ENCODE measurements at regions of chr15 and their contacts with region 1.

Region 1: GRCh38 chr15:34437687-34438086 is at the start of gene GOLGA8A:
- DNase-seq: peak; percentile 79
- H3K4me3 Mint-ChIP-seq: peak within 1 kb of the TSS; percentile 92
- H3K27ac Mint-ChIP-seq: peak within 1 kb of the TSS; percentile 95
- H3K4me1 Mint-ChIP-seq: peaks cover 20% of the 10 kb centered on the region
- H3K27me3 Mint-ChIP-seq: peaks cover 14% of the 10 kb centered on the region
- total RNA-seq, gene GOLGA8A: 238 and 258 TPM in 2 replicates

Region 2: GRCh38 chr15:33894193-33894592 is 543.5 kb before region 1 on chr15:
- intact Hi-C with region 1: no loop called
- DNase-seq: no peak
- H3K4me3 Mint-ChIP-seq: no peak overlapping the region
- H3K27ac Mint-ChIP-seq: no peak overlapping the region
- H3K4me1 Mint-ChIP-seq: peaks cover 12% of the 10 kb centered on the region
- H3K27me3 Mint-ChIP-seq: no peaks in the 10 kb centered on the region

Region 3: GRCh38 chr15:34490417-34491193 is 52.9 kb after region 1 on chr15:
- intact Hi-C with region 1: no loop called
- DNase-seq: no peak
- H3K4me3 Mint-ChIP-seq: no peak overlapping the region
- H3K27ac Mint-ChIP-seq: no peak overlapping the region
- H3K4me1 Mint-ChIP-seq: peaks cover 3% of the 10 kb centered on the region
- H3K27me3 Mint-ChIP-seq: peaks cover 70% of the 10 kb centered on the region

Region 4: GRCh38 chr15:34514251-34514670 is 76.6 kb after region 1 on chr15:
- intact Hi-C with region 1: loop called (anchors 10 kb)
- DNase-seq: no peak
- H3K4me3 Mint-ChIP-seq: peak overlapping the region; percentile 77
- H3K27ac Mint-ChIP-seq: no peak overlapping the region
- H3K4me1 Mint-ChIP-seq: peaks cover 15% of the 10 kb centered on the region
- H3K27me3 Mint-ChIP-seq: peaks cover 57% of the 10 kb centered on the region